ENCODE measurements at regions of chr7 and their contacts with region 1.

Region 1: GRCh38 chr7:27972276-27972675 is 208.3 kb downstream of the JAZF1 start:
- DNase-seq: peak in 4 of 5 donors; percentile 26 to 47 (median 31)
- H3K4me3 ChIP-seq: peak overlapping the region; percentile 7 to 48
- H3K4me3 Mint-ChIP-seq: peak overlapping the region; percentile 75 to 91 (median 84)
- H3K27ac ChIP-seq: no peak overlapping the region
- H3K27ac Mint-ChIP-seq: peak overlapping the region; percentile 40 to 92 (median 86)
- H3K4me1 ChIP-seq: peaks cover 23% of the 10 kb centered on the region
- H3K4me1 Mint-ChIP-seq: peaks cover 32 to 43% (median 33%) of the 10 kb centered on the region in 4 donors
- H3K27me3 ChIP-seq: no peaks in the 10 kb centered on the region
- H3K27me3 Mint-ChIP-seq: no peaks in the 10 kb centered on the region

Region 2: GRCh38 chr7:27952456-27953285 is 19.6 kb before region 1 on chr7:
- CTCF ChIA-PET with region 1: interaction called, 9 read pairs
- POLR2A ChIA-PET with region 1: interaction called, 30 read pairs
- intact Hi-C with region 1: no loop called
- DNase-seq: peak in 3 of 5 donors; percentile 15 to 32 (median 19)
- H3K4me3 ChIP-seq: no peak overlapping the region
- H3K4me3 Mint-ChIP-seq: peak overlapping the region in 7 of 8 donors; percentile 8 to 73 (median 47)
- H3K27ac ChIP-seq: no peak overlapping the region
- H3K27ac Mint-ChIP-seq: peak overlapping the region; percentile 66 to 92 (median 86)
- H3K4me1 ChIP-seq: peaks cover 35% of the 10 kb centered on the region
- H3K4me1 Mint-ChIP-seq: peaks cover 17 to 36% (median 33%) of the 10 kb centered on the region in 4 donors
- H3K27me3 ChIP-seq: no peaks in the 10 kb centered on the region
- H3K27me3 Mint-ChIP-seq: no peaks in the 10 kb centered on the region

Region 3: GRCh38 chr7:28346676-28347363 is 374.5 kb after region 1 on chr7:
- CTCF ChIA-PET with region 1: no interaction called
- POLR2A ChIA-PET with region 1: no interaction called
- intact Hi-C with region 1: no loop called
- DNase-seq: no peak
- H3K4me3 ChIP-seq: no peak overlapping the region
- H3K4me3 Mint-ChIP-seq: no peak overlapping the region
- H3K27ac ChIP-seq: no peak overlapping the region
- H3K27ac Mint-ChIP-seq: no peak overlapping the region
- H3K4me1 ChIP-seq: no peaks in the 10 kb centered on the region
- H3K4me1 Mint-ChIP-seq: no peaks in the 10 kb centered on the region
- H3K27me3 ChIP-seq: no peaks in the 10 kb centered on the region
- H3K27me3 Mint-ChIP-seq: peaks cover 2 to 12% of the 10 kb centered on the region in 2 donors